ENCODE measurements at regions of chr9 and their contacts with region 1.

Region 1: DNA sequence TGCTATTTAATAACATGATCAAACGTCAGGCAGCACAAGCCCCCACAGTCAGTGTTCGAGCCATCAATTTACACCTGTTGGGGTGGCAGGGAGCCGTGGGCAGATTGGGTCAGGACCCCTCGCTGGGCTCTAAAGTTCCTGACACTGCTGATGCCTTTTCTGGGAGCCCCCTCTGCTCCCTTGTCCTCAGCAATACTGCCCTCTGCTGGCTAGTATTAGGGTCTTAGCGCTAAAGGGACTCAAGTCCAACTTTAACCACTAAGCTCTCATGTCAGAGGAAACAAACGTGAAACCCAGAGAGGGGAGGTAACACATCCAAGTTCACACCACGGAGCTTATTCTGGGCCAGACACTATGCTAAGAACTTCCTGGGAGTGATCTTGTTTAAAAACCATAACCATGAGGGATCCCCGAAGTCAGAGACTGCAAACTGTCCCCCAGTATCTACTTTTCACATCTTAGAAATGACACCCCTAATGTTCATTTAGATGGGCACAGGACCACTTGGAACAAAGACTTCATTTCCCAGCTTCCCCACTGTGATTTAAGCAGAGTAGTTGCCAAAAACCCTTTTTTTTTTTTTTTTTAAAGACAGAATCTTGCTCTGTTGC is 20.4 kb downstream of the ANKS6 start:
- DNase-seq: peak; percentile 80
- H3K4me3 Mint-ChIP-seq: no peak overlapping the region
- H3K27ac Mint-ChIP-seq: no peak overlapping the region
- H3K4me1 Mint-ChIP-seq: no peaks in the 10 kb centered on the region
- H3K27me3 Mint-ChIP-seq: no peaks in the 10 kb centered on the region

Region 2: GRCh38 chr9:98315551-98316060 is 460.3 kb before region 1 on chr9:
- intact Hi-C with region 1: loop called (anchors 1 kb)
- DNase-seq: peak; percentile 93
- H3K4me3 Mint-ChIP-seq: no peak overlapping the region
- H3K27ac Mint-ChIP-seq: no peak overlapping the region
- H3K4me1 Mint-ChIP-seq: no peaks in the 10 kb centered on the region
- H3K27me3 Mint-ChIP-seq: no peaks in the 10 kb centered on the region

Region 3: DNA sequence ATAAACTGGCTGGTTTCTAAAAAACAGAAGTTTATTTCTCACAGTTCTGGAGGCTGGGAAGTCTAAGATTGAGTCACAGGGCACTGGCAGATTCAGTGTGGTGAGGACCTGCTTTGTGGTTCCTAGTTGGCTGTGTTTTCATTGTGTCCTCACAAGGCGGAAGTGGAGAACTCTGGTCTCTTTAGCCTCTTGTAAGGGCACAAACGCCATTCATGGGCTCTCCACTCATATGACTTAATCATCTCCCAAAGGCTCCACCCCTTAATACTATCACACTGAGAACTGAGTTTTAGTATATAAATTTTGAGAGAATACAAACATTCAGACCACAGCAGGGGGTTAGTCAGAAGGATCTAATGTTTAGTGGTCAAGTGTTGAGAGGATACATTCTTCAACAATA is 654.4 kb after region 1 on chr9:
- intact Hi-C with region 1: no loop called
- DNase-seq: no peak
- H3K4me3 Mint-ChIP-seq: no peak overlapping the region
- H3K27ac Mint-ChIP-seq: no peak overlapping the region
- H3K4me1 Mint-ChIP-seq: peaks cover 15% of the 10 kb centered on the region
- H3K27me3 Mint-ChIP-seq: peaks cover 14% of the 10 kb centered on the region

Measured in activated CD4-positive, alpha-beta T cell treated with anti-CD3 and anti-CD28 coated beads, Interleukin-2, amount 10 ng/mL, durations not matched to agents 24 days and 14 days (primary cell).